ENCODE measurements at regions of chr1 and their contacts with region 1.

Region 1: GRCh38 chr1:160997323-160998038 is 23.5 kb downstream of the F11R start:
- DNase-seq: peak in 8 of 9 donors; percentile 14 to 52 (median 44)
- ATAC-seq: peak; percentile 80
- H3K4me3 ChIP-seq: no peak overlapping the region
- H3K4me3 Mint-ChIP-seq: no peak overlapping the region
- H3K27ac ChIP-seq: no peak overlapping the region
- H3K27ac Mint-ChIP-seq: peak overlapping the region in 8 of 9 donors; percentile 3 to 74 (median 44)
- H3K4me1 ChIP-seq: no peaks in the 10 kb centered on the region
- H3K4me1 Mint-ChIP-seq: peaks cover 6 to 14% (median 11%) of the 10 kb centered on the region in 7 donors
- H3K27me3 ChIP-seq: no peaks in the 10 kb centered on the region
- H3K27me3 Mint-ChIP-seq: no peaks in the 10 kb centered on the region

Region 2: DNA sequence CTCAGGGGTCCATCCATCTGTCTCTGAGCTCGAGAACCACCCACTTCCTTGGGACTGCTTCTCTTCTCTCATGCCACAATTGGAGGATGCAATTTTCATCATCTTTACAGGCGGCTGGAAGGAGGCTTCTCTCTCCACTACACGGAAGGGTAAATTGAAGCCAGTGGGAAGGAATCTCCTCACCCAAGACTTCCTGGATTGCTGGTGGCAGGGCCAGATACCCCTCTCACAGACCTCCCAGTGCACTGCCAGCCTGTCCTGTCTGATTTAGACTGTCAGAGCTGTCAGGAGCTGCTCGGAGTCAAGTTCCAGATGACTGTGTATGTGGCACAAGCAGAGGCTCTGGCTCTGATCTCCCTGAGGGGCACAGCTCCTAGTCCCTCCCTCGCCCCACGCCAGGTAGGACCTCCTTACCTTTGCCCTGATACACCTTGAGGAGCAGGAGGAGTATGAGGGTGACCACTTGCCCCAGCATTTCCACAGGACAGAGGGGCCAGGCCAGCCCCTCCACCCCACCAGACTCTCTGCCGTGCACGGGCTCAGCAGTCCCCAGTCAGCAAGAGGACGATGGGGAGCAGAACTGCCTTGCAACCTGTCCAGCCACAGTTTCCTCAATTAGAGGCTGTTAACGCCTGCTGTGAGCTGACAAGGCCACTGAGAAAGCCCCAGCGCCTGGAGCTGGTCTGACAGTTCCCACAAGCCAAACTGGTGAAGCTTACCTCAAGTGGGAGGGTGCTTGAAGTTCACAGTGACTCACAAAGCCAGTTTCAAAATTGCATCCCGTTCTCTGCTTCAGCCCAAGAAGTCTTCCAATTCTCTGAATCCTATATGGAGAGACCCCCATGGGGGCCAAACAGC is 135.0 kb before region 1 on chr1 and contains the start of gene CD244:
- CTCF ChIA-PET with region 1: no interaction called
- POLR2A ChIA-PET with region 1: no interaction called
- intact Hi-C with region 1: no loop called
- DNase-seq: peak in 2 of 9 donors; percentile 21 to 56
- ATAC-seq: peak; percentile 90
- H3K4me3 ChIP-seq: peak within 1 kb of the TSS; percentile 51
- H3K4me3 Mint-ChIP-seq: peak within 1 kb of the TSS in 6 of 10 donors; percentile 9 to 77 (median 14)
- H3K27ac ChIP-seq: no peak within 1 kb of the TSS
- H3K27ac Mint-ChIP-seq: peak within 1 kb of the TSS in 4 of 9 donors; percentile 26 to 52 (median 45)
- H3K4me1 ChIP-seq: peaks cover 0 to 10% of the 10 kb centered on the region in 2 donors
- H3K4me1 Mint-ChIP-seq: peaks cover 5 to 38% (median 26%) of the 10 kb centered on the region in 7 donors
- H3K27me3 ChIP-seq: no peaks in the 10 kb centered on the region
- H3K27me3 Mint-ChIP-seq: peaks cover 0 to 7% (median 0%) of the 10 kb centered on the region in 5 donors
- total RNA-seq, gene CD244: 0.27 to 33.6 (median 0.46) TPM

Region 3: GRCh38 chr1:161013488-161014230 is 16.2 kb after region 1 on chr1:
- CTCF ChIA-PET with region 1: interaction called, 12 read pairs
- POLR2A ChIA-PET with region 1: interaction called, 6 read pairs
- intact Hi-C with region 1: loop called in 1 of 2 experiments (anchors 2 kb)
- DNase-seq: peak; percentile 23 to 63 (median 57)
- ATAC-seq: peak; percentile 88
- H3K4me3 ChIP-seq: peak overlapping the region; percentile 57
- H3K4me3 Mint-ChIP-seq: peak overlapping the region; percentile 74 to 97 (median 84)
- H3K27ac ChIP-seq: peak overlapping the region; percentile 73
- H3K27ac Mint-ChIP-seq: peak overlapping the region; percentile 91 to 98 (median 96)
- H3K4me1 ChIP-seq: peaks cover 10 to 29% of the 10 kb centered on the region in 2 donors
- H3K4me1 Mint-ChIP-seq: peaks cover 23 to 49% (median 40%) of the 10 kb centered on the region in 7 donors
- H3K27me3 ChIP-seq: no peaks in the 10 kb centered on the region
- H3K27me3 Mint-ChIP-seq: no peaks in the 10 kb centered on the region

Region 4: GRCh38 chr1:161045750-161046571 is 48.5 kb after region 1 on chr1 and contains the start of gene USF1:
- CTCF ChIA-PET with region 1: interaction called, 12 read pairs
- POLR2A ChIA-PET with region 1: interaction called, 9 read pairs
- intact Hi-C with region 1: loop called in 1 of 2 experiments (anchors 2 kb)
- DNase-seq: peak; percentile 84 to 96 (median 93)
- ATAC-seq: peak; percentile 89
- H3K4me3 ChIP-seq: peak within 1 kb of the TSS; percentile 93
- H3K4me3 Mint-ChIP-seq: peak within 1 kb of the TSS; percentile 93 to 100 (median 97)
- H3K27ac ChIP-seq: peak within 1 kb of the TSS; percentile 92
- H3K27ac Mint-ChIP-seq: peak within 1 kb of the TSS; percentile 92 to 100 (median 99)
- H3K4me1 ChIP-seq: peaks cover 17 to 23% of the 10 kb centered on the region in 2 donors
- H3K4me1 Mint-ChIP-seq: peaks cover 41 to 54% (median 49%) of the 10 kb centered on the region in 7 donors
- H3K27me3 ChIP-seq: no peaks in the 10 kb centered on the region
- H3K27me3 Mint-ChIP-seq: no peaks in the 10 kb centered on the region
- total RNA-seq, gene USF1: 71.6 to 115 (median 91.7) TPM

Region 5: GRCh38 chr1:161098210-161099068 is 101.0 kb after region 1 on chr1 and contains the start of gene KLHDC9:
- CTCF ChIA-PET with region 1: interaction called, 123 read pairs
- POLR2A ChIA-PET with region 1: interaction called, 17 read pairs
- intact Hi-C with region 1: loop called (anchors 1 kb)
- DNase-seq: peak; percentile 29 to 68 (median 42)
- ATAC-seq: peak; percentile 57
- H3K4me3 ChIP-seq: peak within 1 kb of the TSS; percentile 81
- H3K4me3 Mint-ChIP-seq: peak within 1 kb of the TSS; percentile 81 to 94 (median 90)
- H3K27ac ChIP-seq: peak within 1 kb of the TSS; percentile 47
- H3K27ac Mint-ChIP-seq: peak within 1 kb of the TSS; percentile 87 to 100 (median 96)
- H3K4me1 ChIP-seq: peaks cover 9 to 11% of the 10 kb centered on the region in 2 donors
- H3K4me1 Mint-ChIP-seq: peaks cover 18 to 40% (median 23%) of the 10 kb centered on the region in 7 donors
- H3K27me3 ChIP-seq: no peaks in the 10 kb centered on the region
- H3K27me3 Mint-ChIP-seq: peaks cover 0 to 12% (median 0%) of the 10 kb centered on the region in 5 donors
- total RNA-seq, gene KLHDC9: 0.40 to 1.1 TPM in 2 of 5 experiments, not detected in the others

Region 6: DNA sequence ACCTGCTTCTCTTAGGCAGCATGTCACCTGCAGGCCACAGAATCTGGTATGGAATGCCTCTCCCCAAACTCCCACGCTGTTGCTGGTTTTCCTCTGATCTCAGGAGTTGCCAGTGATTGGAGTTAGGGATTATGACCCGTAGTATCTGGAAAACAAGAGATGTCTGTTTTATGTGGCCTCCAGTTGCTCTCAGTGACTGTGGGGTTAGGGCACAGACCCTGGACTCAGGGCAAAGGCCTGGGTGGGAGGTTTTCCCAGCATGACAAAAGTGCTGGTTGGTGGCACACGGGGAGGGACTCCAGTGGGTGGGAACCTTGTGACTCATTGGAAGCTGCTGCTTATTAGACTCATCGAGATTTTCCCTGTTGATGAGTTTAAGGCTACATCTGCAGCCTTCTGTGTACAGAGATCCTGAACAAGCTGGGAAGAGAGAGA is 240.6 kb after region 1 on chr1 and contains the start of gene NR1I3:
- CTCF ChIA-PET with region 1: no interaction called
- POLR2A ChIA-PET with region 1: no interaction called
- intact Hi-C with region 1: no loop called
- DNase-seq: no peak
- ATAC-seq: no peak
- H3K4me3 ChIP-seq: no peak within 1 kb of the TSS
- H3K4me3 Mint-ChIP-seq: no peak within 1 kb of the TSS
- H3K27ac ChIP-seq: no peak within 1 kb of the TSS
- H3K27ac Mint-ChIP-seq: no peak within 1 kb of the TSS
- H3K4me1 ChIP-seq: no peaks in the 10 kb centered on the region
- H3K4me1 Mint-ChIP-seq: peaks cover 0 to 2% (median 0%) of the 10 kb centered on the region in 7 donors
- H3K27me3 ChIP-seq: no peaks in the 10 kb centered on the region
- H3K27me3 Mint-ChIP-seq: peaks cover 0 to 12% (median 8%) of the 10 kb centered on the region in 5 donors
- total RNA-seq, gene NR1I3: not detected

Region 7: DNA sequence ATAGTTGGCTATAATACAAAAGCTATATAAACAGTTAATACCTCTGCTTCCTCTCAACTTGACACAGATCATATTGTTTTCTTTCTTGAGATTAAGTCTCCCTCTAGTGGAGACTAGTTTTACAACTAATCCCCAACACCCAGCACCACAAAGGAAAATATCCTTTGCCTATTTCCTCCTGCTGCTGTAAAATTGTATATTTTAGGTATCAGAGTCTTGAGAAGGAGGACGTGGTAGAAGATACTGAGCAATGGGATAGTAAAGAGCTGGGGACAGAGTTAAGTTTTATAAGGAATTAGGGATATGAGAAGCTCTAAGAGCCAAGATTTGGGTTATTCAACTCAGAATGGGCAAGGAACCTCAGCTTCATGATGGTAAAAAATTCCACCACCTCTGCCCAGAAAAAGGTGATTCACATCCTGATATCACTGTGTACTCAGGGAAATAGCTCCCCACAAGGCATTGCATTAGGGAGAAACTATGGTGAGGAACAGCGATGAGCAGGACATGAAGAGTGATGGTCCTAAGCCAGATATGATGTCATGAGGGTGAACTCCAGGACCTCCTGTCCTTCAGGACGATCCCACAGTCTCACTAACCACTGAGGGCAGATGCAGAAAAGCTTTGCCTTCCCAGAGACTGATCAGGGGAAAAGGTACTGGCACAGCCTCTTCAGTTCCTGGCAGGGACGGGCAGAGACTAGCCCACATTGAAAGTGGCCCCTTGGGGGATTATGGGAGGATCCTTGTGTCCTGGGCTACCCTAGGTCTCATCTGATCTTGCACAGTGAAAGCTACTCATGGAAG is 384.9 kb after region 1 on chr1:
- CTCF ChIA-PET with region 1: no interaction called
- POLR2A ChIA-PET with region 1: no interaction called
- intact Hi-C with region 1: loop called in 1 of 2 experiments (anchors 2 kb)
- DNase-seq: peak in 6 of 9 donors; percentile 40 to 68 (median 59)
- ATAC-seq: peak; percentile 91
- H3K4me3 ChIP-seq: no peak overlapping the region
- H3K4me3 Mint-ChIP-seq: no peak overlapping the region
- H3K27ac ChIP-seq: no peak overlapping the region
- H3K27ac Mint-ChIP-seq: peak overlapping the region in 3 of 9 donors; percentile 53 to 76 (median 73)
- H3K4me1 ChIP-seq: peaks cover 0 to 3% of the 10 kb centered on the region in 2 donors
- H3K4me1 Mint-ChIP-seq: peaks cover 0 to 19% (median 13%) of the 10 kb centered on the region in 7 donors
- H3K27me3 ChIP-seq: no peaks in the 10 kb centered on the region
- H3K27me3 Mint-ChIP-seq: no peaks in the 10 kb centered on the region

Region 8: DNA sequence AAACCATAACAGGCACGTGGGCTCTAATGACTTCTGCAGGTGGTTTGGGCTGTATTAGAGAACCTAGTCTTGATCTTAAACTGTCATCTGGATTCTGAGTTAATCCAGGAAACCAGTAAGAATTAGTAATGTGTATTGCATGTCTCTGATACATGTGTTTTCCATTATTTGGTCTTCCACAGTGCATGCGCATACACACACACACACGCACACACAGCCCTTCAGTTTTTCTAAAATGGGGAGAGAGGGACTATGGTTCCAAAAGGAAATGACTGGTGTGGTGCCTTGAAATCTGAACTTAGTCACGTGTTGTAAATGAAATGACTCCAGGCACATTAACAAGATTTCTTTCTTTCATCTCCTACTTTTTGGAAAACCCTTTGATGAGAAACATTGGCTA is 958.6 kb after region 1 on chr1:
- CTCF ChIA-PET with region 1: no interaction called
- POLR2A ChIA-PET with region 1: no interaction called
- intact Hi-C with region 1: no loop called
- DNase-seq: no peak
- ATAC-seq: no peak
- H3K4me3 ChIP-seq: no peak overlapping the region
- H3K4me3 Mint-ChIP-seq: no peak overlapping the region
- H3K27ac ChIP-seq: no peak overlapping the region
- H3K27ac Mint-ChIP-seq: peak overlapping the region in 2 of 9 donors; percentile 20 to 61
- H3K4me1 ChIP-seq: peaks cover 0 to 16% of the 10 kb centered on the region in 2 donors
- H3K4me1 Mint-ChIP-seq: peaks cover 22 to 67% (median 52%) of the 10 kb centered on the region in 7 donors
- H3K27me3 ChIP-seq: no peaks in the 10 kb centered on the region
- H3K27me3 Mint-ChIP-seq: no peaks in the 10 kb centered on the region

Measured in naive thymus-derived CD4-positive, alpha-beta T cell (primary cell).